ENCODE measurements at regions of chr3 and their contacts with region 1.

Region 1: GRCh38 chr3:63993653-63994079 is 29.6 kb downstream of the PSMD6 start:
- DNase-seq: peak; percentile 20
- ATAC-seq: peak; percentile 83
- H3K4me3 Mint-ChIP-seq: no peak overlapping the region
- H3K27ac Mint-ChIP-seq: no peak overlapping the region
- H3K4me1 Mint-ChIP-seq: no peaks in the 10 kb centered on the region
- H3K27me3 Mint-ChIP-seq: no peaks in the 10 kb centered on the region
- CTCF ChIP-seq: peak; percentile 36

Region 2: GRCh38 chr3:63863148-63864007 is 130.3 kb before region 1 on chr3 and contains the starts of genes ATXN7 and THOC7:
- CTCF ChIA-PET with region 1: no interaction called
- POLR2A ChIA-PET with region 1: no interaction called
- intact Hi-C with region 1: loop called (anchors 1 kb)
- DNase-seq: peak; percentile 77
- ATAC-seq: peak; percentile 80
- H3K4me3 Mint-ChIP-seq: peak within 1 kb of the TSS; percentile 96
- H3K27ac Mint-ChIP-seq: peak within 1 kb of the TSS; percentile 94
- H3K4me1 Mint-ChIP-seq: peaks cover 50% of the 10 kb centered on the region
- H3K27me3 Mint-ChIP-seq: no peaks in the 10 kb centered on the region
- CTCF ChIP-seq: no peak
- total RNA-seq, gene ATXN7: 45.2 and 46.7 TPM in 2 replicates
- total RNA-seq, gene THOC7: 50.2 and 53.8 TPM in 2 replicates

Region 3: DNA sequence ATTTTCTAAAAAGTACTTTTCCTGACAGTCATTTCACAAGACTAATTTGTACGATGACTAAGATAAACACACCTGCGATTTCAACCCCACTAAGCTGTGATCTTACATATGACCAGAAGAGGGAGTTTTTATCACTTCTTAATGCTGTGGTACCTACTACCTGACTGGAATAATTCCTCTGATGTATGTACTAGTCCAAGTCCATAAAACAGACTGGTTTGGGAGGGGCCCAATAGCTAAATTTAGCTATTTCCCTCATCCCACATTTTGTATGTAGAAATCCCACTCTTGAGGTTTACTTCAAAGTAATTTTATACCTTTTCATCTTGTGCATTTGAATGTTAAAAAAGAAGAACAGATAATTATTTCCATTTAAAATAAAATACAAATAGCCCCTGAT is 31.8 kb before region 1 on chr3:
- CTCF ChIA-PET with region 1: interaction called, 7 read pairs
- POLR2A ChIA-PET with region 1: no interaction called
- intact Hi-C with region 1: loop called (anchors 1 kb)
- DNase-seq: no peak
- ATAC-seq: peak; percentile 86
- H3K4me3 Mint-ChIP-seq: no peak overlapping the region
- H3K27ac Mint-ChIP-seq: no peak overlapping the region
- H3K4me1 Mint-ChIP-seq: peaks cover 40% of the 10 kb centered on the region
- H3K27me3 Mint-ChIP-seq: no peaks in the 10 kb centered on the region
- CTCF ChIP-seq: no peak

Region 4: GRCh38 chr3:63975723-63976122 is 17.9 kb before region 1 on chr3:
- CTCF ChIA-PET with region 1: interaction called, 11 read pairs
- POLR2A ChIA-PET with region 1: interaction called, 3 read pairs
- intact Hi-C with region 1: no loop called
- DNase-seq: no peak
- ATAC-seq: no peak
- H3K4me3 Mint-ChIP-seq: no peak overlapping the region
- H3K27ac Mint-ChIP-seq: no peak overlapping the region
- H3K4me1 Mint-ChIP-seq: peaks cover 23% of the 10 kb centered on the region
- H3K27me3 Mint-ChIP-seq: no peaks in the 10 kb centered on the region
- CTCF ChIP-seq: no peak

Region 5: DNA sequence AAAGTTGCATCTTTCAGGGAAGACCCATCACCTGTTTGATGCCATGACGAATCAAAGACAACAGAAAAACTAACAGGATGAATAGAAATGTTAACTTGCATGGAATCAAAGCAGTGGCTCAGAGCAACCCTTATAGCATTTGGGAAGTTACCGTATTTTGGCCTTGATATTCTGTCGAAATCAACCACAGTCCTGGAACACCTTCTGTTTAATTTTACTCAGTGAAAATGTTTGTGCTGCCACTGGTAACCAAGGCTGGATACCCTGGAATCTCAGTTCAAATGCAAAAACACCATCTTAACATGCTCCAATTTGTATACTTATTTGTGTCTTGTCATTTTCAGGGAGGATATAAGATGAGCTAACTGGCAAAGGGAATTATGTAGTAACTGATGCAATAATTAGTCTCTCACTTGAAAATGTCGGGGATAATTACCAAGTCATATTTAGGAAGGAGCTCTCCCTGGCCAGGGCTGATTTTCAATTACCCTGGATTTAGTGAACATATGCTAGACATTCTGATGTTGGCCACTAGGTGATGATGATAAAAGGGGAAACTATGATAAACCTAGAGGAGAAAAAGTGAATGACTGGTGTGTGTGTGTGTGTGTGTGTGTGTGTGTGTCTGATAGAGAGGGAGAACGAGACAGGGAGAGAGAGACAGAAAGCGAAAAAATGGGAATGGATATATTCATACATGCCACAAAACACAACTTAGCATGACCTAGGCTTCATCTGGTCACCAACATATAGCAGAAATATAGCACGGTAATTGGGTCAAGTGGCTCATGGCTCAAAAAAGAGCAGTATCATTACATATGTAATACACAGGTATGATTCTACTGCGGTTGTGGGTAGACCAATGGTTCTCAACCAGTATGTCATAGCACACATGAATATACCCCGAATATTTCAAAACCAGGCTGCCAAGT is 250.6 kb after region 1 on chr3:
- CTCF ChIA-PET with region 1: no interaction called
- POLR2A ChIA-PET with region 1: no interaction called
- intact Hi-C with region 1: no loop called
- DNase-seq: no peak
- ATAC-seq: no peak
- H3K4me3 Mint-ChIP-seq: no peak overlapping the region
- H3K27ac Mint-ChIP-seq: no peak overlapping the region
- H3K4me1 Mint-ChIP-seq: no peaks in the 10 kb centered on the region
- H3K27me3 Mint-ChIP-seq: no peaks in the 10 kb centered on the region
- CTCF ChIP-seq: no peak